Right ventricle myocardium inferior (tissue), 1 donor: ENCODE measurements at regions of chr1 and their contacts with region 1.

Region 1: DNA sequence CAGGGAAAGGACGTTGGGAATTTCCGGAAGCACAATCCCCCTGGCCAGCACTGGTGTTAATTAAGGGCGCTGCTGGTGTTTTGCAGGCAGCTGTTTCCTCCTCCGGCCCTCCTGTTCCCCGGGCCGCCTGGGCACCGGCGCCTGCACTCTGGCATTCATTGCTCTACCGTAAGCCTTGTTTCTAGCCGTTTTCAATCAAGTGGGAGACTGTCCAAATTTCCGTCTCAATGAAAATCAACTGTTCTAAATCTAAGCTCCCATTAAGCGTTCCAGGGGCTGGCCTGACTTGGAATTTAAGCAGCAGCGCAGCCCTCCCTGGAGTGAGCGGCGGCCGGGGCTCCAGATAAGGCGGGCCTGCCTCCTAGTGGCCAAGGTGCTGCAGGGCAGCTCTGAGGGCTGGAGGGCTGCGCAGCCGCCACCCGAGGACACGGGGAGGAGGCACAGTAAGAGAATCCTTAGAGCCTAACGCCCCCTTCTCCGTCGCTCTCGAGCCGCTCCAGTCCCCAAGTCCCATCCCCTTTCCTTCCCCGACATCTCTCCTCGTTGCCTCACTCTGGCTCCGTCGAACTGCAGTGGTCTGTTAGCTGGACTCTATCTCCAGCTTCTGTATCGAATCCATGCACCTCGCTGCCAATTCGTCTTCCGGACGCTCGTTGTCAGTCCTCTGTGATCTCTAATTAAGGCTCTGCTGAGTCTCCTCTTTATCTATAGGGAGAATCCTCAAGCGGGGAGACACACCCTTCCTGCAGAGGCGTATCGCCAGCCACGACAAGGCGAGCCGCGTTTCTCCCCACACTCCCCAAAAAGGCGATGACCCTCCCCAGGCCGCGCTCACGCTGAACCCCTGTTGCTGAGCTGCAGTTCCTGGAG is 57.8 kb upstream of the LRRC8D start:
- DNase-seq: peak; percentile 93
- ATAC-seq: peak; percentile 98

Region 2: DNA sequence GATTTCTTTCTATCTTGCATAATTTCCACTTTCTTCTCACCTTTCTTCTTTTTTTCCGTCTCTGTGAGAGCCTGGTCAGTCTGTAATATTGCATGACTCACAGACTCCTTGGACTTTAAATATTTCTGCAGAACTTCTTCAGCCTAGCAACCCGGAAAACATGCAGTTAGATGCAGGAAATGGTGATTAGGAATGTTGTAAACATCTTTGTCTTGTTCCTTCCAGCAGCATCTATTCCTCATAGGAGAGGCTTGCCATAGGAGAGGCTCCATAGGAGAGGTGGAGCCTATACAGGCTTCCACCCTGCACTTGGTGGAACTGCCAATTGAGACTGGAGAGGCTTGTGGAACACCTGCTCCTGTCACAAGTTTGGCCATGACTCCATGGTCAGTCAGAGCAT is 500.4 kb before region 1 on chr1:
- intact Hi-C with region 1: no loop called
- DNase-seq: no peak
- ATAC-seq: no peak

Region 3: GRCh38 chr1:89598450-89599331 is 164.3 kb before region 1 on chr1:
- intact Hi-C with region 1: loop called (anchors 2 kb)
- DNase-seq: no peak
- ATAC-seq: no peak

Region 4: GRCh38 chr1:89649783-89650182 is 113.2 kb before region 1 on chr1:
- intact Hi-C with region 1: no loop called
- DNase-seq: no peak
- ATAC-seq: no peak

Region 5: GRCh38 chr1:89692601-89693521 is 70.2 kb before region 1 on chr1:
- intact Hi-C with region 1: loop called (anchors 5 kb)
- DNase-seq: no peak
- ATAC-seq: peak; percentile 56

Region 6: GRCh38 chr1:89728381-89728780 is 34.6 kb before region 1 on chr1:
- intact Hi-C with region 1: loop called (anchors 2 kb)
- DNase-seq: no peak
- ATAC-seq: no peak